PC-9 (cell line): ENCODE measurements at regions of chr11 and their contacts with region 1.

Region 1: DNA sequence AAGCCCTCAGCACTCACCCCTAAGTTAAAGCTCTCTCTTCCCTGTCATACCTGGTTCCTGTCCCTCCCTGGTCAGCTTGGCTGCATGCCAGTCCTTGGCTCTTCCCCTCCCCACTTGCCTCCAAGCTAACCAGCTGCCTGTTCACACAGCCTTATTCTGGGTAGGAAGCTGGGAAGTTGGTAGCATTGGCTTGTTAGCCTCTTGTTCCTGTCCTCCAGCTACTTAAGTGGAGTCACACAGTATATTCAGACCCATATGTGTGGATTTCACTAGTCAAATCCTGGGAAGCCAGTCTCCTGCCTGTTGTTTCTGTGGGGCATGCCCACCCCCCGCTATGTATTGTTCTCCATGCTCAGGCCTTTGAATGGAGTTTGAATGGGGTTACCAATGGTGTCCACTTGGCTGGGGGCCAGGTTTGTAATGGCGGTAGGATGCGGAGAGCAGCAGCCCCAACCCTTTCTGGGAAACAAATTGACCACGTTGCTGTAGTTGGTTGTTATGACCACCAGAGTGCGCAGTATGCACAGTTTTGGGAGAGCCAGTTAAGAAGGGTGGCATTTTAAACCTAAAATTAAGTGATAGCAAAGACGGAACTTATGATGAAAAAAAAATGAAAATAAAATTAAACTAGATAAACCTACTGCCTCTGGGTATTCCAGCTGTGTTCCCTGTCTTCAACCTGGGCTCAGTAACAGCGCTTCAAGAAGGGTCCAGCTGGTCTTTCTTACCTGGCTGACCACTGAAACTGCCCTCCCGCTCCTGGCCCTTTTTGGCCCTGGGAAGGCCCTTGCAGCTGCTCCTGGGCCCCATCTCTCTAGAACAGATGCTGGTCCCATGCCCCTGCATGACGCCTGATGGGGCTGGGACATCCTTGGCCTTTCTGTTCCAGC is 10.7 kb upstream of the RPS3 start:
- DNase-seq: peak; percentile 74 to 75
- H3K4me3 ChIP-seq: no peak overlapping the region
- H3K27ac ChIP-seq: no peak overlapping the region
- H3K4me1 ChIP-seq: peaks cover 45% of the 10 kb centered on the region
- H3K27me3 ChIP-seq: no peaks in the 10 kb centered on the region
- CTCF ChIP-seq: peak; percentile 91

Region 2: DNA sequence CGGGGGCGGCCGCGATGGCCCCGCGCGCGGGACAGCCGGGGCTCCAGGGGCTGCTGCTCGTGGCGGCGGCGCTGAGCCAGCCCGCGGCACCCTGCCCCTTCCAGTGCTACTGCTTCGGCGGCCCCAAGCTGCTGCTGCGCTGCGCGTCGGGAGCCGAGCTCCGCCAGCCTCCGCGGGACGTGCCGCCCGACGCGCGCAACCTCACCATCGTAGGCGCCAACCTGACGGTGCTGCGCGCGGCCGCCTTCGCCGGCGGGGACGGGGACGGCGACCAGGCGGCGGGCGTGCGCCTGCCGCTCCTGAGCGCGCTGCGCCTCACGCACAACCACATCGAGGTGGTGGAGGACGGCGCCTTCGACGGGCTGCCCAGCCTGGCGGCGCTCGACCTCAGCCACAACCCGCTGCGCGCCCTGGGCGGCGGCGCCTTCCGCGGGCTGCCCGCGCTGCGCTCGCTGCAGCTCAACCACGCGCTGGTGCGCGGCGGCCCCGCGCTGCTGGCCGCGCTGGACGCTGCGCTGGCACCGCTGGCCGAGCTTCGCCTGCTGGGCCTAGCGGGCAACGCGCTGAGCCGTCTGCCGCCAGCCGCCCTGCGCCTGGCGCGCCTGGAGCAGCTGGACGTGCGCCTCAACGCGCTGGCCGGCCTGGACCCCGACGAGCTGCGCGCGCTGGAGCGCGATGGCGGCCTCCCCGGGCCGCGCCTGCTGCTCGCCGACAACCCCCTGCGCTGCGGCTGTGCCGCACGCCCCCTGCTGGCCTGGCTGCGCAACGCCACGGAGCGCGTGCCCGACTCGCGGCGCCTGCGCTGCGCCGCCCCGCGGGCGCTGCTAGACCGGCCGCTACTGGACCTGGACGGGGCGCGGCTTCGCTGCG is 147.4 kb before region 1 on chr11:
- CTCF ChIA-PET with region 1: no interaction called
- POLR2A ChIA-PET with region 1: no interaction called
- intact Hi-C with region 1: no loop called
- DNase-seq: peak in 1 of 2 experiments; percentile 93
- H3K4me3 ChIP-seq: no peak overlapping the region
- H3K27ac ChIP-seq: no peak overlapping the region
- H3K4me1 ChIP-seq: no peaks in the 10 kb centered on the region
- H3K27me3 ChIP-seq: peaks cover 56% of the 10 kb centered on the region
- CTCF ChIP-seq: no peak

Region 3: GRCh38 chr11:75328426-75329277 is 60.0 kb before region 1 on chr11:
- CTCF ChIA-PET with region 1: interaction called, 8 read pairs
- POLR2A ChIA-PET with region 1: no interaction called
- intact Hi-C with region 1: loop called (anchors 1 kb)
- DNase-seq: peak; percentile 83 to 92
- H3K4me3 ChIP-seq: no peak overlapping the region
- H3K27ac ChIP-seq: 0 out of 2 replicates have a peak overlapping the region, but pooled peaks have one; percentile 20
- H3K4me1 ChIP-seq: peaks cover 31% of the 10 kb centered on the region
- H3K27me3 ChIP-seq: no peaks in the 10 kb centered on the region
- CTCF ChIP-seq: peak; percentile 85

Region 4: DNA sequence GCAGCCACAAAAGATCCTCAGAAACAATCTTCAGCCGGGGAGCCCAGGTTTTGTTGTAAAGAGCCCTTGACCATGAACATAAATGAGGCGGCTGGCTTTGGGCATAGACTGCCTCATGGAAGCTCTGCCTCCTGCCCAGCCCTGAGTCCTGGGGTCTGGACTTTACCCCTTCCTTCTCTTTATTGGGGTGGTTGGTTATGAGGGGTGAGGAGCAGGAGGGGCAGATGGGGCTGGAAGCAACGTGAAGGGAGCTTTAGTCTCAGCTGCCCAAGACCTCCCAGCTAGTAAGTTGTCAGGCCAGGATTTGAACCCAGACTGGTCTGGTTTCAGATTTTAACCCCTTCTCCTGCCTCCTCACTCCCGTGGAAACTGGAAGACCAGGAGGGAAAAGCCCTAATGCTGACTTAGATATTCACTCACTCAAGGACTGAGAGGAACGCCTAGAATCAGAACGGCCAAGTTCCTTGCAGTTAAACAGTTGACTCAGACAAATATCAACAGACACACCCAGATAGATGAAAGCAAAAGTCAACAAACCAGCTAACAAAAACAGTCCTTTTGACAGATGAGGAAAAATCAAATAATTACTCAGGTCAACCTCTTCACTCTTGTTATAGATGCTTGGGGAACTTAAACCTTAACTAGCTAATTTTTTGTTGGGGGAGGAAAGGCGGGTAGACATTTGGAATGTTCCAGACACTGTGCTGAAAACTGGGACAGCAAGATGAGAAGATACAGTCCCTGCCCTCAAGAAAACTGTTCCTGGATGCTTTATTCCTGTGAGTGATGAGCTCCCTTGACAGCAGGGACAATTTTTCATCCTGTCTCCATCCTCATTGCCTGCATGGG is 16.5 kb before region 1 on chr11:
- CTCF ChIA-PET with region 1: no interaction called
- POLR2A ChIA-PET with region 1: interaction called, 16 read pairs
- intact Hi-C with region 1: no loop called
- DNase-seq: peak; percentile 32 to 95
- H3K4me3 ChIP-seq: no peak overlapping the region
- H3K27ac ChIP-seq: peak overlapping the region; percentile 32
- H3K4me1 ChIP-seq: peaks cover 36% of the 10 kb centered on the region
- H3K27me3 ChIP-seq: no peaks in the 10 kb centered on the region
- CTCF ChIP-seq: no peak

Region 5: DNA sequence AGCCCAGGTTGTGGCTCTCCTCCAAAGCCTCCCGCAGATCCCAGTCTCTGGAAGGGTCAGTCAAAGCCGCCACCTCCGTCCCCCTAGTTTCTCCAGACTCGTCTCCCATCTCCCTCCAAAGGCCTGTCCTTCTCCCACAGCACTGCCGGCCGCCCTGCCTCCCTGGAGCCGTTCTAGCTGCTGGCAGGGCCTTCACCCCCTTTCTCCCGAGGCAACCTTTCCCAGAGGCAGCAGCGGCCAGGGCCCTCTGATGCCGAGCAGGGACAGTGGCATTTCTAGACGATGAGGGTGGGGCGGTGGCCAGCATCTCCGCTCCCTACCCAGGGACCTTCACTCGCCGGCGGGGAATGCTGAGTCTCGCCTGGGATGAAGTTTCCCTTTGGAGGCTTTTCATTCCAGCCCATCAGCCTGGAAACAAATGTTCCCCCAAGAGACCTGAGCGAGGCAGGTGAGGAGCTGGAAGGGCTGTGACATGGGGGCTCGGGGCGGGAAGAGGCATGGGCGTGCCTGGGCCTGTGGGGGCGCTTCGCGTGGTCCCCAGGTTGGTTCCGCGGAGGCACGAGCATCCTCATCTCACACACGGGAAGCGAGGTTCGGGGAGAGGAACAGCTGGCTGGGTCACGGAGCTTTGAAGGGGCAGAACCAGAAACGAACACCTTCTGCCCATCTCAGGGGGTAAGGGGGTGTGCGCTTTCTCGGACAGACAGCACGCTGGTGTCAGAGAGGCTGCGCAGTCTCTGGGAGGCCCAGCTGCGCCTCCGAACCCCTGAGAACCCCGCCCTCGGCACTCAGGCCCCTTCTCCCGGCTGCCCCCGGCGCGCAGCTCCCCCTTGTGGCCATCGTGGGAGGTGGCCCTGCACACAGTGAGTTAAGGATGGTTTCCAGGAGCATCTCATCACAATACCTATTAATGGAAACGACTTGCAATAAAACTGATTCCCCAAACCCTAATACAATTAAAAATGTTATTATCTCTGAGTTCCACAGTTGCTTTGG is 62.5 kb after region 1 on chr11:
- CTCF ChIA-PET with region 1: no interaction called
- POLR2A ChIA-PET with region 1: no interaction called
- intact Hi-C with region 1: no loop called
- DNase-seq: peak in 1 of 2 experiments; percentile 37
- H3K4me3 ChIP-seq: no peak overlapping the region
- H3K27ac ChIP-seq: no peak overlapping the region
- H3K4me1 ChIP-seq: no peaks in the 10 kb centered on the region
- H3K27me3 ChIP-seq: 0 out of 2 replicates have a peak, but pooled peaks cover 8% of the 10 kb centered on the region
- CTCF ChIP-seq: peak; percentile 96

Region 6: GRCh38 chr11:75532200-75533048 is 143.8 kb after region 1 on chr11:
- CTCF ChIA-PET with region 1: interaction called, 6 read pairs
- POLR2A ChIA-PET with region 1: no interaction called
- intact Hi-C with region 1: loop called (anchors 1 kb)
- DNase-seq: peak; percentile 72 to 76
- H3K4me3 ChIP-seq: no peak overlapping the region
- H3K27ac ChIP-seq: no peak overlapping the region
- H3K4me1 ChIP-seq: peaks cover 28% of the 10 kb centered on the region
- H3K27me3 ChIP-seq: no peaks in the 10 kb centered on the region
- CTCF ChIP-seq: peak; percentile 99

Region 7: DNA sequence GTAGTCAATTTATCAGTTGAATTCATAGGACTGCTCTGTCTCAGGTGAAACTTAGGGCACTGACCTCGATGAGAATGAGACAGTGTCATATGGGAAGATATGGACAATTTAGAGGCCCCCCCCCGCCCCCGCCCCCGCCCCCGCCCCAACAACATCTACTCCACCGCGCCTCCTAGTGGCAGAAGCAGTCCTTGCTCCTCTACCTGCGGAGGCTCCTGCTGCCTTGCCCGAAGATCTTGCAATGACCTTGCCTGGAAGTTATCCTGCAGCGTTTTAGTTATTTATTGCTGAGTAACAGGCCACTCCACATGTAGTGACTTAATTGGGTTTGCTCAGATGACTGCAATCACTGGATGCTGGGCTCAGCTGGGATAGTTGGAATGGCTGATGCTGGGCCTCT is 188.6 kb after region 1 on chr11:
- CTCF ChIA-PET with region 1: no interaction called
- POLR2A ChIA-PET with region 1: no interaction called
- intact Hi-C with region 1: no loop called
- DNase-seq: peak in 1 of 2 experiments; percentile 29
- H3K4me3 ChIP-seq: no peak overlapping the region
- H3K27ac ChIP-seq: no peak overlapping the region
- H3K4me1 ChIP-seq: peaks cover 7% of the 10 kb centered on the region
- H3K27me3 ChIP-seq: no peaks in the 10 kb centered on the region
- CTCF ChIP-seq: peak; percentile 60; the same call in 1 of the 2 replicates

Region 8: GRCh38 chr11:75867775-75868374 is 479.2 kb after region 1 on chr11:
- CTCF ChIA-PET with region 1: no interaction called
- POLR2A ChIA-PET with region 1: no interaction called
- intact Hi-C with region 1: loop called (anchors 1 kb)
- DNase-seq: peak; percentile 14 to 52
- H3K4me3 ChIP-seq: no peak overlapping the region
- H3K27ac ChIP-seq: no peak overlapping the region
- H3K4me1 ChIP-seq: peaks cover 19% of the 10 kb centered on the region
- H3K27me3 ChIP-seq: no peaks in the 10 kb centered on the region
- CTCF ChIP-seq: peak; percentile 95

Region 9: GRCh38 chr11:76419896-76420295 is 1031.3 kb after region 1 on chr11:
- CTCF ChIA-PET with region 1: no interaction called
- POLR2A ChIA-PET with region 1: no interaction called
- intact Hi-C with region 1: no loop called
- DNase-seq: no peak
- H3K4me3 ChIP-seq: no peak overlapping the region
- H3K27ac ChIP-seq: no peak overlapping the region
- H3K4me1 ChIP-seq: no peaks in the 10 kb centered on the region
- H3K27me3 ChIP-seq: no peaks in the 10 kb centered on the region
- CTCF ChIP-seq: peak; percentile 44; the same call in 1 of the 2 replicates